Left colon (tissue), 2 donors: ENCODE measurements at regions of chr16 and their contacts with region 1.

Region 1: GRCh38 chr16:8885674-8886592 is 3.8 kb downstream of the LITAFD start:
- DNase-seq: peak in 1 of 2 donors; percentile 51
- ATAC-seq: peak; percentile 52

Region 2: DNA sequence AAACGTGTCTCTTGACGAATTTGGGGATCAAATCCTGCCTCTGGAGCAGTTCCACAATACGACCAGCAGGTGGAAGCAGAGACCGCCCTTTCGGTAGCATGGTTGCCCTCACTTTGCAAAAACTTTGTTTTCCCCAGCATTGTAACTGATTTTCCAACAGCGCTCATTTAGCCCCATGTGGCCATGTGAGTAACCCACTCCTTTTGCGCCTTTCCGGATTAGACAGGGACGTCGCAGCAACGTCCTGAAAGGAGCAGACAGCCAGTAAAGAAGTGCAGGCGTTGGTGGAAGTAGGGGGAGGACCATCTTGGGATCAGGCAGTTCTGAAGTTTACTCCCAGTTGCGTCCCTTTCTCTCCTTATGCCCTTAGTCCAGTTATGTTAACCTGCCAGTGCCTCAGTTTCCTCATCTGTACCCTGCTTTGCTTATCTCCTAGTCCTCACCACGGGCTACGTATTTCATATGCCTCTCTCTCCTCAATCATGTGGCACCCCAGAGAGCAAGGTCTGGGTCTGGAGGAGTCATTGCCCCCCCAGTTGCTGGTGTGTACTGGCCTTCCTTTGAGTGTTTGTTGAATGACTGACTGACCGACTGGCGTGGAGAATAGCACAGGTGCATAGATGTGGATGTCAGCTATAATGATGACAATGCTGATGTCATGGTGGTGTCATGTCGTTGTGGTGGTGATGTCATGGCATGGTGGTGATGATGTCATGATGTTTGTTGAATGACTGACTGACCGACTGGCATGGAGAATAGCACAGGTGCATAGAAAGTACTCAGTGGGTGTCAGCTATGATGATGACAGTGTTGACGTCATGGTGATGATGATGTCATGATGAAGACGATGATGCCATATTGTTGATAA is 317.9 kb before region 1 on chr16:
- intact Hi-C with region 1: loop called (anchors 5 to 10 kb)
- DNase-seq: peak; percentile 62 to 66
- ATAC-seq: peak; percentile 90

Region 3: DNA sequence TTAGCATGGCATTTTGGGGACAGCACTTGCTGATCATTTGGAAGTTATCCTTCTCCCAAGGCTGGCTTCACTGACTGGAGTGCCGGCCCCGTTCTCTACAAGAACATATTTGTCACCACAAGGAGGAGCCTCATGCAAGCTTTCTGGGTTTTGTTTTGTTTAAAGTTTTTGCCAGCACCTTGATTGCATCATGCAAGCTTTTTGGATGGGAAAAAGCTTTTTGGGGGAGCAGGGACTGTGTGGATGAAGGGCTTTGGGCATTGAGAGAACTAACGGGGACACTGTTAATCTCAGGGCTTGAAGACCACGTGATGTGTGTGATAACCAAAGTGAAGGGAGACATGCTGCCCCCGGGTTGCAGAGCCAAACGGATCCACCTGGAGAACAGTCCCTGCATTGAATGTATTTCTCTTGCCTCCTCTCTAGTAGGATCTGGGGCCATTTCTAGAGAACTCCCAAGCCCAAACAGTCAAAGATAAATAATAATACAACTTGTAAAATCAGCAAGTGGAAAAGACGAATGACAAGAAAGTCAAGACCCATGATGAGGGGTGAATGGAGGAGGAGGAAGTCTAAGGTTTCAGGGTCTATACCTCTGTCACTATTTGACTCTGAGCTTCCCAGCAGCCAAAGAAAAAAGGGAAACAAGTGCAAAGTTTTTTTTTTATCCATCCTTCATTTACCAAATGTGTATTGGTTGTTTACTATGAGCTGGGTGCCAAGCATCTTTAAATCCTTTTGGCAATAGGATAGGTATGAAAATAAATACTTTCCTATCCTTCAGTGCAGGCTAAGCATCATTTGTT is 312.8 kb before region 1 on chr16:
- intact Hi-C with region 1: loop called (anchors 5 to 10 kb)
- DNase-seq: no peak
- ATAC-seq: peak; percentile 58

Region 4: DNA sequence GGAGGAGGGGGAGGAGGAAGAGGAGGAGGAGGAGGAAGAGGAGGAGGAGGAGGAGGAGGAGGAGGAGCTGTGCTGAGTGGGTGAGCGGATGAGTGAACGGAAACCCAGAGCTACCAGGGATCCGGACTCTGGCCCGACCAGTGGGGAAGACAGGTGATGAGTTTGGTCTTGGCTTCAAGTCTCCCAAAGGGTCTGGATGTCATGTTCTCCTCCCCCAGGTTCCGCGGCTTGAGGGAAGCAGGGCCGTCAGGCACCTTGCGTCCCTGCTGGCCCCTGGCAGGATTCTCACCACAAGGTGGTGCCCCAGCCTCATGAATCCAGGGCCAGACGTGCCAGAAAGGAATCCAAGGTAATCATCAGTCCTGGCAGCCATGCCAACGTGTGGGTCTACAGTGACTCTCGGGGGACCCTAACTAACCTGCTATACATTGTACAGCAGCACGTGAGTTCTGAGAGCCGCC is 225.1 kb before region 1 on chr16:
- intact Hi-C with region 1: loop called in 1 of 2 experiments (anchors 5 kb)
- DNase-seq: peak; percentile 37 to 72
- ATAC-seq: peak; percentile 97